Heart right ventricle (tissue), 16 donors: ENCODE measurements at regions of chr21 and their contacts with region 1.

Region 1: GRCh38 chr21:32826329-32827167 is 55.0 kb upstream of the PAXBP1 start:
- DNase-seq: peak in 1 of 2 donors; percentile 23
- ATAC-seq: peak in 7 of 8 donors; percentile 59 to 88 (median 67)
- H3K4me3 ChIP-seq: no peak overlapping the region
- H3K27ac ChIP-seq: no peak overlapping the region
- H3K4me1 ChIP-seq: no peaks in the 10 kb centered on the region
- H3K27me3 ChIP-seq: no peaks in the 10 kb centered on the region
- CTCF ChIP-seq: peak in 8 of 9 donors; percentile 11 to 60 (median 52)

Region 2: DNA sequence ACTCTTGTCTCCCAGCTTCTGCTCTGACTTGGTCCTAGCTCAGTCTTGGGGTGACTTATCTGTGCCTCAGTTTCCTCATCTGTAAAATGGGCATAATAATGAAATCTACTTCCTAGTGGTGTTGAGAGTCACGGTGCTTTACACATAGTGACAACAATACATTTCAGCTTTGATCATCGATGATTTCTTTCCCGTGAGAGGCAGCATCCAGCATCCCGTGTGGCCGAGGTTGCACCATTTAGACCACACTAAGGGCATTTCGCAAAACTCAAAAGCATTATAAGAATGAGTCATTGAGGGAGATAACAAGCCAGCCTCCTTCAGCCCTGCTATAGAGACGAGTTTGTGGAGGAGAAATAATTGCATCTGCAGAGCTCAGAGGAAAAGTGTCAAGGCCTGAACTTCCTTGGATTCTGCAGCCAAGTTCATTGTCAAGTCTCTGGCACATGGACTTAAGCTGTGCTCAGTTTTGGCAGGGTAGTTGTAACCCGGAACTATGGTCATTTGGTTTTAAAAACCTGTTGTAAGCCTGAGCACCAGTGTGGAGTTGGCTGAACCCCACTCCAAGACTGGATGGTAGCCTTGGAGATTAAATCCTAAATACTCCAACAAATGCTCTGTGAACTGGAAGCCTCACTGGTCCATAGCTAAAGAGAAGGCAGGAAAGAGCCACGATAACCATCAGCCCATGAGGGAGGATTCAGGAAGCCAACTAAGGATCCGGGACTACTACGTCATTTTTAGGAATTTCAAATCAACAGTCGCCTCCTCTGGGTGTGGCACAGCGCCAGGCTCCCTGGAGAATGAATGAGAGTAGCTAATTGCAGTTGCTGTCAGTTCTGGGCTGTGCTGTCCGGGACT is 305.4 kb before region 1 on chr21:
- intact Hi-C with region 1: no loop called
- DNase-seq: peak; percentile 91 to 96
- ATAC-seq: peak; percentile 65 to 81 (median 78)
- H3K4me3 ChIP-seq: peak overlapping the region in 2 of 10 donors; percentile 2 to 7
- H3K27ac ChIP-seq: peak overlapping the region; percentile 43 to 93 (median 88)
- H3K4me1 ChIP-seq: peaks cover 30 to 74% (median 66%) of the 10 kb centered on the region in 9 donors
- H3K27me3 ChIP-seq: no peaks in the 10 kb centered on the region
- CTCF ChIP-seq: no peak

Region 3: GRCh38 chr21:32641710-32642698 is 184.5 kb before region 1 on chr21:
- intact Hi-C with region 1: loop called in 1 of 10 experiments (anchors 10 kb)
- DNase-seq: no peak
- ATAC-seq: no peak
- H3K4me3 ChIP-seq: no peak overlapping the region
- H3K27ac ChIP-seq: no peak overlapping the region
- H3K4me1 ChIP-seq: no peaks in the 10 kb centered on the region
- H3K27me3 ChIP-seq: no peaks in the 10 kb centered on the region
- CTCF ChIP-seq: no peak

Region 4: DNA sequence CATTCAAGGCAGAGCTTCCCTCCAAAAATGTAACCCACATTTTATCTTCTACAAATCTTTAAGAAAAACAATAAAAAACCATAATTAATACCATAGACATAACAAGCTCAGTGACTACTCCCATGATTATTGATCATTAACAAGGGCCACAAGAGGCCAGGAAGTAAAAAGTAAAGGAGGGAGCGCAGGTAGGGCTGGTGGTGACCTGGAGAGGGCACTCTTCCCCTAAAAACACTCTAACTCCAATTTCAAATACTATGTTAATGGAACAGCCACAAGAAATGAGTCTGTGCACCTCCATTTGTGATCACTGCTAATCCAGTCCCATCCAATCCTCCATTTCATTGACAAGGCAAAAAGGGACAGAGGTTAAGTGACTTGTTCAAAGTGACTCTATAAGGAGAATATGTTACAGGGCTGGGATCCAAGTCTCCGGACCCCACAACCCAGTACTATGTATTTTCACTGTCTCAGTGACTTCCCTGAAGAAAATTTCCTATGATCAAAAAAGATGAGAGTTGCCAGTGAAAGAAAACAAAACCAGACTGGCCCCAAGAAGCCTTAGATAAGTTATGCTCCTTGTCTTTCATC is 173.1 kb before region 1 on chr21:
- intact Hi-C with region 1: loop called in 8 of 10 experiments (anchors 2 to 10 kb)
- DNase-seq: no peak
- ATAC-seq: no peak
- H3K4me3 ChIP-seq: no peak overlapping the region
- H3K27ac ChIP-seq: no peak overlapping the region
- H3K4me1 ChIP-seq: no peaks in the 10 kb centered on the region
- H3K27me3 ChIP-seq: no peaks in the 10 kb centered on the region
- CTCF ChIP-seq: peak in 8 of 9 donors; percentile 10 to 62 (median 56)

Region 5: GRCh38 chr21:32782698-32783097 is 43.9 kb before region 1 on chr21:
- intact Hi-C with region 1: no loop called
- DNase-seq: no peak
- ATAC-seq: no peak
- H3K4me3 ChIP-seq: no peak overlapping the region
- H3K27ac ChIP-seq: no peak overlapping the region
- H3K4me1 ChIP-seq: no peaks in the 10 kb centered on the region
- H3K27me3 ChIP-seq: no peaks in the 10 kb centered on the region
- CTCF ChIP-seq: no peak

Region 6: GRCh38 chr21:32807717-32808380 is 18.7 kb before region 1 on chr21:
- intact Hi-C with region 1: no loop called
- DNase-seq: no peak
- ATAC-seq: peak in 3 of 8 donors; percentile 46 to 80 (median 56)
- H3K4me3 ChIP-seq: no peak overlapping the region
- H3K27ac ChIP-seq: peak overlapping the region in 4 of 10 donors; percentile 4 to 39 (median 13)
- H3K4me1 ChIP-seq: peaks cover 0 to 7% (median 0%) of the 10 kb centered on the region in 9 donors
- H3K27me3 ChIP-seq: no peaks in the 10 kb centered on the region
- CTCF ChIP-seq: no peak

Region 7: DNA sequence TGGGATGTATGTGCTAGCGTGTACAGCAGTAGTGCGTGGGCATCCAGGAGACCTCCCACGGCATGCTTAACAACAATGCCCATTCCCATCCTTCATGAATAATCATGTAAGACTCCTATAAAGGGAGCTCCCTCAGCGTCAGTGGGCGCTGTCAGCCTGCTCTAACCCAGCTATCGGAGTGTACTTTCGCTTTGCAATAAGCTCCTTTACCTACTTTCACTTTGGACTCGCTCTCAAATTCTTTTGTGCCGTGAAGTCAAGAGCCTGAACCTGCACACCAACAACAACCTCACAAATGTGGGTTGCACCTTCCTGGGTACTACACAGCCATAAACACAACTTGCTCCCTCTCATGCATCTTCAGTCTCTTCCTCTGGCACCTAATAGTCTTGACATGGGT is 59.8 kb after region 1 on chr21:
- intact Hi-C with region 1: loop called in 1 of 10 experiments (anchors 10 kb)
- DNase-seq: no peak
- ATAC-seq: peak in 1 of 8 donors; percentile 25
- H3K4me3 ChIP-seq: peak overlapping the region in 1 of 10 donors; percentile 24
- H3K27ac ChIP-seq: no peak overlapping the region
- H3K4me1 ChIP-seq: no peaks in the 10 kb centered on the region
- H3K27me3 ChIP-seq: peaks cover 0 to 27% (median 0%) of the 10 kb centered on the region in 7 donors
- CTCF ChIP-seq: no peak